ENCODE measurements at regions of chr17 and their contacts with region 1.

Region 1: DNA sequence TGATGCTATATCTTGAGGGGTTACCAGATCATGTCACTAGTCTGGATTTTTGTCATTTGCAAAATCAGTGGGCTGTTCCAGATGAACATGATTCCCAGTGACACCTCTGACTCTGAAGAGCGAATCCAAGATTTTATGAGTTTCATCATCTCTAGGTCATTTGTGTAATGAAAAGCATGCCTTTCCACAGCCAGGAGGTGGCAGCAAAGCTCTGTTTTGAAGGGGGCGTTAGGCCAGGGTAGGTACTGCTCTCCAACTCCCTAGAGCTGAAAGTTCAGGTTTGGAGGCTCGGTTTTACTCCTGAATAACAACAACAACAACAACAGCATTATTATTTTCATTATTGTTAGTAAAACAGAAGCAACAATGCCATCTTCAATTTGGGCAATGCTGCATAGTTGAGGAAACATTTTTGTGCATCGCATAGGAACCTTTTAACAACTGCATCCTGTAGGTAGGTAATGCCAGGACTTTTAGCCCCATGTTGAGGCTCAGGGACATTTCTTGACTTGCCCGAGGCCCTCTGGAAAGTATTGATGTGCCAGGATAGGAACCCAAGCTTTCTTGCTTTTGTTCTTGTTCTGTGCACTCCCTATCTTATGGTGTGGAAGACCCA is 77.0 kb downstream of the MYH13 start:
- DNase-seq: peak; percentile 80
- ATAC-seq: peak; percentile 92
- H3K4me3 Mint-ChIP-seq: no peak overlapping the region
- H3K27ac Mint-ChIP-seq: no peak overlapping the region
- H3K4me1 Mint-ChIP-seq: peaks cover 12% of the 10 kb centered on the region
- H3K27me3 Mint-ChIP-seq: no peaks in the 10 kb centered on the region; the same call in 1 of the 2 replicates
- CTCF ChIP-seq: peak; percentile 52

Region 2: DNA sequence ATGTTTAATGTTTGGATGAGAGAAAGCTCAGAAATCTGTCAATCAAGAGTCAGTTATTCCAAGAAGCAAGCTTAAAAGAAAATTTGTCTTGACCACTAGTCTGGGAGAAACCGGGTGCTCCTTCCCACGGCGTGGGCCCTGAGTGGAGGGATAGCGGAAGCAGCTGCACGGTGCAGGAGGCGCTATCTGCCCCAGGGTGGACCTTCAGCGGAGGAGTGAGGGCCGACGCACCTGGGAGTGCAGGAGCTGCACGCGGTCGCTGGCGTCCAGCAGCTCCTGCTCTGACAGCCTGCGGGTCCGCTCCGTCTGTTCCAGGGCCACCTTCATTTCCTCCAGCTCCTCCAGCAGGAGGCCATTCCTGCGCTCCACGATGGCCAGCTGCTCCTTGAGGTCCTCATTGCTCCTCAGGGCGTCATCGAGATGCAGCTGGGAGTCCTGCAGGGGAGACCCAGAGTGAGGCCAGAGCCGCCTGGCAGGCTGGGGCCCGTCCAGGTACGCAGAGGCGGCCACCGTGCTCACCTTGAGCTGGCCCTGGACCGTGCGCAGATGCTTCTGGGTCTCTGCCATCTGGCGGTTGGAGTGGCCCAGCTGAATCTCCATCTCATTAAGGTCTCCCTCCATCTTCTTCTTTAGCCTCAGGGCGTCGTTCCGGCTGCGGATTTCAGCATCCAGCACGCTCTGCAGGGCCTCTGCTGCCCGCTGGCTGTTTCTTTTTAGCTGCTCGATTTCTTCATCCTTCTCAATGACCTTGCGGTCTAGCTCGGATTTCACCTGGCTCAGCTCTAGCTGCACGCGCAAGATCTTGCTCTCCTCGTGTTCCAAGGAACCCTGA is 13.4 kb after region 1 on chr17:
- CTCF ChIA-PET with region 1: interaction called, 21 read pairs
- POLR2A ChIA-PET with region 1: no interaction called
- DNase-seq: no peak
- ATAC-seq: no peak
- H3K4me3 Mint-ChIP-seq: no peak overlapping the region
- H3K27ac Mint-ChIP-seq: no peak overlapping the region
- H3K4me1 Mint-ChIP-seq: peaks cover 25% of the 10 kb centered on the region
- H3K27me3 Mint-ChIP-seq: peaks cover 8% of the 10 kb centered on the region
- CTCF ChIP-seq: no peak

Region 3: DNA sequence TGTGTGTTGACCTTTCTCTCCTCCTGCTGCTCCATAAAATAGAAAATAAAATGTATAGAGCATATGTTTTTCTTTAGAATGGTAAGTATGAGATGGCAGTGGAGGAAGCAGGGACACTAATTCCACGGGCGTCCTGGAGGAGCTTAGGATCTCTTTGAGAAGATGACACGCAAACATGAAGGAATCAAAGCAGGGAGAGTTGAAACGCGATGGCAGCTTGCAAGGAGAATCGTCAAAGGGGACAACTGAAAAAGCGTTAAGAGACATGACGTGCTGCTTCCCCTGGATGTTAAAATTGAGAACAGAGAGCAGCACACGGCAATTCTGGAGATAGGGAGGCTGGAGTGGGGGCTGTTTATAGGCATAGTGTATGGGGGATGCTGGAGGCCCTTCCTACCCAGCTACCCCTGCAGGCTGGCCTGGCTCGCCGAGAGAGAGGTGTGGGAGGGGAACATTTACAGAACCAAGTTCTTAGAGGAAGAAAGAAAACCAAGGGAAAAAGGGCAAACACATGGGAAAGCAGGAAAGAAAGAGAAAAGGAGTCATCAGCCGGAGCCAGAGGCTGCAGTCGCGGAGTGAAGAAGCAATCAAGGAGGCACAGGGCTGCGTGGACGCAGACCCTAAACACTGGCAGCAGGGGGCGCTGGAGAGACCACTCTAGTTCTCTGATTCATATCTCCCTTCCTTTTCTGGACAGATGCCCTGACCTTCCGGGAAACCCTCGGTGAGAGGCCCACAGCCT is 21.1 kb after region 1 on chr17:
- CTCF ChIA-PET with region 1: interaction called, 21 read pairs
- POLR2A ChIA-PET with region 1: no interaction called
- DNase-seq: peak; percentile 77
- ATAC-seq: peak; percentile 89
- H3K4me3 Mint-ChIP-seq: no peak overlapping the region
- H3K27ac Mint-ChIP-seq: no peak overlapping the region
- H3K4me1 Mint-ChIP-seq: peaks cover 14% of the 10 kb centered on the region
- H3K27me3 Mint-ChIP-seq: peaks cover 8% of the 10 kb centered on the region
- CTCF ChIP-seq: peak; percentile 80

Region 4: GRCh38 chr17:10327640-10328039 is 31.8 kb after region 1 on chr17:
- CTCF ChIA-PET with region 1: interaction called, 12 read pairs
- POLR2A ChIA-PET with region 1: no interaction called
- DNase-seq: peak; percentile 94
- ATAC-seq: peak; percentile 90
- H3K4me3 Mint-ChIP-seq: no peak overlapping the region
- H3K27ac Mint-ChIP-seq: no peak overlapping the region
- H3K4me1 Mint-ChIP-seq: 0 out of 2 replicates have a peak, but pooled peaks cover 5% of the 10 kb centered on the region
- H3K27me3 Mint-ChIP-seq: no peaks in the 10 kb centered on the region; the same call in 1 of the 2 replicates
- CTCF ChIP-seq: peak; percentile 99

Region 5: DNA sequence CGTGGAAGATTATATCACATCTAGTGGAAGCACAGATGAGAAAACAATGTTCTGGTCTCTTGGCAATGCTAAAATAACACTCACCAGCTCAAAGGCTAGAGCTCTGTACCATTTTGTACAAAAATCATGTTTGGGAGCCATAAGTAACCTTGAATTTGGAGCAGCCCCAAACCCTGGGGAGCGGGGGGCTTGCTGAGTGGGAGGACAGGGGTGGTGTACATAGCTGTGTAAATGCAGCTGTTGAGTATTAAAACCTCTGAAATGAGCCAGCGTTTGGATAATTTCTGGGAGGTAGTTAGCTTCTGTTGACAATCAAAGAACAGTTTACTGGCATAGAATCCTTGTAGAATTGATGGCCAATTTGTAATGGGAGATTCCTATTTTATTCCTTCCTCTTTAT is 121.6 kb after region 1 on chr17:
- CTCF ChIA-PET with region 1: no interaction called
- POLR2A ChIA-PET with region 1: no interaction called
- DNase-seq: no peak
- ATAC-seq: no peak
- H3K4me3 Mint-ChIP-seq: no peak overlapping the region
- H3K27ac Mint-ChIP-seq: 0 out of 2 replicates have a peak overlapping the region, but pooled peaks have one; percentile 10
- H3K4me1 Mint-ChIP-seq: peaks cover 27% of the 10 kb centered on the region
- H3K27me3 Mint-ChIP-seq: no peaks in the 10 kb centered on the region
- CTCF ChIP-seq: no peak

Measured in WTC11 (cell line).